GM18951 (cell line): ENCODE measurements at regions of chr14 and their contacts with region 1.

Region 1: GRCh38 chr14:57871459-57872080 is 5.7 kb upstream of the SLC35F4 start:
- POLR2A ChIP-seq: no peak

Region 2: GRCh38 chr14:57533214-57533613 is 338.4 kb before region 1 on chr14:
- in situ Hi-C with region 1: loop called (anchors 25 kb)
- POLR2A ChIP-seq: no peak

Region 3: GRCh38 chr14:57692671-57693070 is 178.9 kb before region 1 on chr14:
- in situ Hi-C with region 1: loop called (anchors 10 kb)
- POLR2A ChIP-seq: no peak

Region 4: GRCh38 chr14:58749066-58749669 is 877.6 kb after region 1 on chr14:
- in situ Hi-C with region 1: no loop called
- POLR2A ChIP-seq: no peak